ENCODE measurements at regions of chr1 and their contacts with region 1.

Region 1: DNA sequence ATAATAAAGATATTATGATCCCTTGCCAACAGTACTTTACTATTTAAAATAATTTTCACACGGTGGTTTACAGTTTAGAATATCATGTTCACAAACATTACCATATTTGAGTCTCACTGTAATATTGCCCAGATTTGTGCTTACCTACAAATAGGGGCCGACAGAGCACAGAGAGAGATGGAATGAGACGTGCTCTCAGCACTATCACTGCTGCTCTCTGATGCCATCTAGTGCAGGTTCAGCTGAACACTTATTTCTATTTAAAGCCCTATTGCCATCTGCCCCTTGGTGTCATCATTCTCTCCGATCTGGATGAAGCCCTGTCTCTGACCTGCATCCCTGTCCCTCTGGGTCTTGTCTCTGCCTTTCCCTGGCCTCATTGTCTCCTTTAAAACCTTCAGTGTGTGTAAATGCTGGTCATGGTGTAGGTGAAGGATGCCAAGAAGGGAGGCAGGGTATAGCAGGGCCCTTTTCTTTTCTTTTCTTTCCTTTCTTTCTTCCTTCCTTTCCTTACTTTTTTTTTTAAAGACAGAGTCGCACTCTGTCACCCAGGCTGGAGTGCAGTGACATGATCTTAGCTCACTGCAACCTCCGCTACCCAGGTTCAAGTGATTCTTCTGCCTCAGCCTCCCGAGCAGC is 6.9 kb upstream of the GPATCH4 start:
- DNase-seq: peak; percentile 78
- H3K4me3 Mint-ChIP-seq: no peak overlapping the region
- H3K27ac Mint-ChIP-seq: no peak overlapping the region
- H3K4me1 Mint-ChIP-seq: peaks cover 12% of the 10 kb centered on the region
- H3K27me3 Mint-ChIP-seq: peaks cover 47% of the 10 kb centered on the region

Region 2: GRCh38 chr1:156435545-156436141 is 172.5 kb before region 1 on chr1:
- CTCF ChIA-PET with region 1: no interaction called
- DNase-seq: peak; percentile 50
- H3K4me3 Mint-ChIP-seq: peak overlapping the region; percentile 71
- H3K27ac Mint-ChIP-seq: peak overlapping the region; percentile 56
- H3K4me1 Mint-ChIP-seq: peaks cover 29% of the 10 kb centered on the region
- H3K27me3 Mint-ChIP-seq: peaks cover 100% of the 10 kb centered on the region

Region 3: GRCh38 chr1:156456622-156457465 is 151.3 kb before region 1 on chr1:
- CTCF ChIA-PET with region 1: interaction called, 12 read pairs
- DNase-seq: peak; percentile 97
- H3K4me3 Mint-ChIP-seq: peak overlapping the region; percentile 77
- H3K27ac Mint-ChIP-seq: peak overlapping the region; percentile 97
- H3K4me1 Mint-ChIP-seq: peaks cover 18% of the 10 kb centered on the region
- H3K27me3 Mint-ChIP-seq: peaks cover 9% of the 10 kb centered on the region

Region 4: DNA sequence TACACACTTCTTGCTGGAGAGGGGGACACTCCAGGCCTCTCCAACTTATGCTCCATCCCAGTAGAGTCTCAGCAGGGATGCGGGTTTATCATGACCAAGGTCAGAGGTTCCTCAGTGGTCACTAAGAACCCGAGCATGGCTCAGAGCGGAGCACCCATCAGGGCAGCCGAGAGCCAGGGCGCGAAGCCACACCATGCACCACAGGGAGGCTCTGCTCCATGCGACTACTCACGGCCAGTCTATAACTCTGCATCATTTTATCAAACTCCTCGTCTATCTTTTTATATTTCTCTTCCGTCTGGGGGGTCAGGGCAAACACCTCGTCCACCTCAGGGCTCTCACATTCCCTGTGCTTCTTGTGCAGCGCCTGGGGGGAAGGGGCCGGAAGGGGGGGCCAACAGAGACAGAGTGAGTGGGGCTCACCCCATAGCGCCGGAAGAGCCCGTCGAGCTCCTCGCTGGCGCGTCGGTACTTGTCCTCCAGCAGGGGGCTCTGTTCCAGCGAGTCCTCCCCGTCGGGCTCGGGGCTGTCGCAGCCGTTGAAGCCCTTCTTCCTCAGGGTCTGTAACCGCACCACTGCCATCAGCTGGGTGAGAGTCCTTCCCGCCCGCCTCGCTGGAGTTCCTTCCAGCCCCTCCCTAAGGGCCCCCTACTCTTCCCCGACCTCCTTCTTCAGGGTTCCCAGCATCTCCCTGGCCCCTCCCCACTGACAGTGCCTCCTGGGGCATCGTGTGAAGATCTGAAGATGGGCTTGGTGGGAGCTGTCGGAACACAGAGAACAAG is 127.6 kb before region 1 on chr1:
- CTCF ChIA-PET with region 1: interaction called, 16 read pairs
- DNase-seq: peak; percentile 84
- H3K4me3 Mint-ChIP-seq: no peak overlapping the region
- H3K27ac Mint-ChIP-seq: peak overlapping the region; percentile 72
- H3K4me1 Mint-ChIP-seq: peaks cover 30% of the 10 kb centered on the region
- H3K27me3 Mint-ChIP-seq: no peaks in the 10 kb centered on the region

Region 5: DNA sequence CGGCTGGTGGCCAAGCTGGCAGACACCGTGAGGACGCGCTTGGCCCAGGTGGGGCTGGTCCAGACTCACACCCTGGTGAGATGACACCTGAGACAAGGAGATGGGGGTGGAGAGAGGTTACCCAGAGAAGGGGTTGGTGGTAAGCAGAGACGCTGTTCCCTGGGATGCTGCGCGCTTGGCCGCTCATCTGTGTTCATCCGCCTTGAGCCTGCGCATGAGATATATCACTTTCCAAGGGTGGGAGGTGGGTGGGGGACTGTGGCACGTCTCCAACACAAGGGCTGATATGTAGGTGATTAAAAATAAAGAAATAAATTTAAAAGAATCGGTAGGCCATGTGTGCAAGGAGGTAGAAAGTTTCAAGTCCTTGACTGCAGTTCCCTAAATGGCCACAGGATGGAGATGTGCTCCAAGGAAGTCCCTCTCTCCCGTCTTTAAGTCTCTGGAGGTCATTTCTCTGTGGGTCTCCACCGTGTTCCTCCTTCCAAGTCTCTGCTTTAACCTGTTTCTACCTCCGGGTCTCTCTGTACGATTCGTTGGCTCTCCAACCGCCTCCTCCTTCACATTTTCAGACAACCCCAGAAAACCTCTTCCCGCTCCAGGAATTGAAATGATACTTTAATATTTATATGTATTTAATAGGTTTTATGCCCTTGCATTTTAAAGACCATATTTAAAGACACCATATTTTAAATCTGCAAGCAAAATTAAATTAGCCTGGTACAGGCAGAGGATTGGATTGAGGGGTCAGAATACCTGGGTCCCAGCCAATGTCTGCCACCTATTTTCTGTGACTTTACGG is 24.1 kb before region 1 on chr1:
- CTCF ChIA-PET with region 1: interaction called, 44 read pairs
- DNase-seq: peak; percentile 86
- H3K4me3 Mint-ChIP-seq: no peak overlapping the region
- H3K27ac Mint-ChIP-seq: no peak overlapping the region
- H3K4me1 Mint-ChIP-seq: peaks cover 33% of the 10 kb centered on the region
- H3K27me3 Mint-ChIP-seq: peaks cover 9% of the 10 kb centered on the region

Region 6: DNA sequence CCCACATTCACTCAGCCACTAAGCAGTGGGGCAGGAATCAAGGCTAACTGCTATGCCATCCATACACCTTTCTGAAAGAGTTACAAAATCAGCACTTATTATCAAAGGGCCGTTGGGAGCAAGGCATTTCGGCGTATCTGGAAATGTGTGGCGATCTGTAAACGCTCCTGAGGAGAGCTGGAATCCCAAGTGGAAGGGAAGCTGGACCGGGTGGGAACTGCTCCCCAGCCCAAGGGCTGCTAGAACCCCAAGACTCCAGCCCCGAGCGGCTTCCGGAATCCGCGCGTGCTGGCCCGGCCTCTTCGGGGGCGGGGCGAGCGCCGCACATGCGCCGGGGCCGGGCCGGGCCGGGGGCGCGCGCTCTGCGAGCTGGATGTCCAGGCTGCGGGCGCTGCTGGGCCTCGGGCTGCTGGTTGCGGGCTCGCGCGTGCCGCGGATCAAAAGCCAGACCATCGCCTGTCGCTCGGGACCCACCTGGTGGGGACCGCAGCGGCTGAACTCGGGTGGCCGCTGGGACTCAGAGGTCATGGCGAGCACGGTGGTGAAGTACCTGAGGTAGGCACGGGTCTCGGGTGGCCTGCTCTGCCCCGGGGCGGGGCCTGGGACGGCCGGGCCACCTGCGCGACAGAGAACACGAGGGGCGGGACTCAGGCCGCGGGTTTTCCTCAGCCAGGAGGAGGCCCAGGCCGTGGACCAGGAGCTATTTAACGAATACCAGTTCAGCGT is 16.6 kb before region 1 on chr1 and contains the start of gene NAXE:
- CTCF ChIA-PET with region 1: interaction called, 29 read pairs
- DNase-seq: peak; percentile 79
- H3K4me3 Mint-ChIP-seq: peak within 1 kb of the TSS; percentile 78
- H3K27ac Mint-ChIP-seq: peak within 1 kb of the TSS; percentile 83
- H3K4me1 Mint-ChIP-seq: peaks cover 33% of the 10 kb centered on the region
- H3K27me3 Mint-ChIP-seq: peaks cover 3% of the 10 kb centered on the region

Region 7: GRCh38 chr1:156625436-156626078 is 17.4 kb after region 1 on chr1:
- CTCF ChIA-PET with region 1: interaction called, 17 read pairs
- DNase-seq: peak; percentile 74
- H3K4me3 Mint-ChIP-seq: peak overlapping the region; percentile 4
- H3K27ac Mint-ChIP-seq: peak overlapping the region; percentile 31
- H3K4me1 Mint-ChIP-seq: peaks cover 12% of the 10 kb centered on the region
- H3K27me3 Mint-ChIP-seq: peaks cover 84% of the 10 kb centered on the region

Region 8: DNA sequence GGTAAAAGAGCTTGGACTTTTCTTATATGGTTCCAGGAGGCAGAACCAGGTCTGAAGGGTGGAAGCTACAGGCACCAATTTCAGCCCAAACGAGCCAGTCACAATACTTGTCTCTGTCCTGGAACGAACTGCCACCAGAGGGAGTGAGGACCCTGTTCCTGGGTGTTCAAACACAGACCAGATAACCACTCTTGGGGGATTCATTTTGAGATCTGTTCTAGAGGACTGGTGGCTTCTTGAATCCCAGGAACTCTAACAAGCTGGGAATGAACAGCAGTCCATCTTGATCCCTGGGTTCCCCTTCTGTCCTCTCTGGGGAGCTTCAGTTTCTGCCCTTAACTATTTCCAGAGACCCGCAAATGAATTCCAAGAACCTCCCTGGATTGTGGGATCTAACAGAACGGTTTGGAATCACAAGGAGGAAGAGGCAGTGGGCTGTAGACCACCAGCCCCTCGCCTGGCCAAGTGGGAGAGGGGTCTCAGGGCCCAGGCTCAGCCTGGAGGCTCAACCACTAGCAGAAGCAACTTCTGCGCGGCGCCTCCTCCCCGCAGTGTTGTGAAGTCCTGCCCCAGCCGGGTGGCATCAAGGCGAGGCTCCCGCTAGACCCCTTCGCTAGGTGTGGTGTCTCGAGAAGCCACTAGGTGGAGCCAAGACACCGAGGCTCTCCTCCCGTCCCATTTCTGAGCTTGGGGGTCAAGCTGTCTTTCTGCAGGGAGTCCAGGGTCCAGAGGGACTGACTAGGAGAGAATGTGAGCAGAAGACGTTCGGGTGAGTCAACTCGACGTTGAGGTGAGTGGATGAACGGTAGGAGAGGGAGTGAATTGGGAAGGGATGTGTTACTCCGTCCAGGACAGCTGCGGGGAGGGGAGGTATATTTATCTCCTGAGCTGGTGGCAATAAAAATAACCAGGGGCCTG is 81.1 kb after region 1 on chr1:
- CTCF ChIA-PET with region 1: no interaction called
- DNase-seq: peak; percentile 84
- H3K4me3 Mint-ChIP-seq: no peak overlapping the region
- H3K27ac Mint-ChIP-seq: no peak overlapping the region
- H3K4me1 Mint-ChIP-seq: peaks cover 34% of the 10 kb centered on the region
- H3K27me3 Mint-ChIP-seq: peaks cover 81% of the 10 kb centered on the region